Right ventricle myocardium inferior (tissue), 1 donor: ENCODE measurements at regions of chr2 and their contacts with region 1.

Region 1: DNA sequence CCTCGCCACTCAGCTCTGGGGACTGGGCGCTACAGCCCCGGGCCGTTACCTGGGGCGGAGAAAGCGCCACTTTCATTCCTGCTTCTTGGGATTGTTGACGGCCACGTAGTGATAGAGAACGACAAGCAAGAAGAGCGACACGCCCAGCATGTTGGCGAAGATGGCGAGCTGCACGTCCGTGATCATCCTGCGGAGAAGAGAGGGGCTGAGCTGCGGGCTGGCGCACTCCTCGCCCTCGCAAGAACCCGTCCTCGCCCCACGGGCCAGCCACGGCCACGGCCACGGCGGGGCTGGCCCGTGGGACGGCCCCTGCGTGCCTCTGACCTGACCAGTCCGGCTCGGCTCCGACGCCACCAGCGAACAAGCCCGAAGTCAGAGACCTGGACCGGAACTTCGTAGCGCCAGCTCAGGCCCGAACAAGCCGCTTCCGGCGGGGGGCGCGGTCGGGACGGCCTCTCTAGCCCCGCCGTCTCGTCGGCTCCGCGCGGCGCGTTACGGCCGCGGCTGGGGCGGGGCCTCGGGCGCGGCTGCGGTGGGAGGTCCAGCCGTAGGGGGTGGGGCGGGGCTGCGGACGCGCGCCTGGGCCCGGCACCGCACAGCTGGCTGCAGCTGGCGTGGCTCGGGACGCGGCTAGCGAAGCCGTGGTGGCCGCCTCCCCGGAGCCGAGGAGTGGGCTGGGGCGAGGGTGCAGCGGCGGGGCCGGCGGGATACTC is at the start of gene OST4:
- DNase-seq: peak; percentile 98
- ATAC-seq: peak; percentile 96
- total RNA-seq, gene OST4: 411 TPM

Region 2: GRCh38 chr2:27050281-27050995 is 21.0 kb before region 1 on chr2:
- intact Hi-C with region 1: loop called (anchors 2 kb)
- DNase-seq: peak; percentile 90
- ATAC-seq: peak; percentile 85

Region 3: DNA sequence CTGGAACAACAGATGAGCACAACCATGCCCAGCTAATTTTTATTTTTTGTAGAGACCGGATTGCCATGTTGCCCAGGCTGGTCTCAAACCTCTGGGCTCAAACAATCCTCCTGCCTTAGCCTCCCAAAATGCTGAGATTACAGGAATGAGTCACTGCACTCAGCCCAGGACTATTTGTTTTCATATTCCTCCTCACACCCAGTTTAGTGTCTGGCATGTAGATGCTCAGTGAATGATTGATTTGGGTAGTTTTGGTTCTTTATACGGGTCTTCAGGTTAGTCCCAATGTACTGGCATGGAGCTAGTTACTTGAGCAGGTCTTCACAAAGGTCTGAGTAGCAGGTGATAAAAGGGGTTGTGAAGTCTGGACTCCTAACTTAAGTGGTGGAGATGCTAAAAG is 292.5 kb after region 1 on chr2:
- intact Hi-C with region 1: no loop called
- DNase-seq: no peak
- ATAC-seq: no peak